ENCODE measurements at regions of chr9 and their contacts with region 1.

Region 1: GRCh38 chr9:114738581-114739316 is 56.8 kb upstream of the TEX48 start:
- DNase-seq: peak in 4 of 5 donors; percentile 67 to 83 (median 70)
- H3K4me3 ChIP-seq: no peak overlapping the region
- H3K27ac ChIP-seq: no peak overlapping the region
- H3K4me1 ChIP-seq: no peaks in the 10 kb centered on the region
- H3K27me3 ChIP-seq: no peaks in the 10 kb centered on the region
- CTCF ChIP-seq: peak; percentile 89

Region 2: GRCh38 chr9:114505187-114506081 is 233.3 kb before region 1 on chr9 and contains the start of gene WHRN:
- intact Hi-C with region 1: no loop called
- DNase-seq: peak; percentile 95 to 98 (median 97)
- H3K4me3 ChIP-seq: peak within 1 kb of the TSS; percentile 76 to 90 (median 83)
- H3K27ac ChIP-seq: peak within 1 kb of the TSS; percentile 41 to 72
- H3K4me1 ChIP-seq: peaks cover 0 to 12% (median 10%) of the 10 kb centered on the region in 3 donors
- H3K27me3 ChIP-seq: no peaks in the 10 kb centered on the region
- CTCF ChIP-seq: no peak
- total RNA-seq, gene WHRN: 14.8 TPM

Region 3: DNA sequence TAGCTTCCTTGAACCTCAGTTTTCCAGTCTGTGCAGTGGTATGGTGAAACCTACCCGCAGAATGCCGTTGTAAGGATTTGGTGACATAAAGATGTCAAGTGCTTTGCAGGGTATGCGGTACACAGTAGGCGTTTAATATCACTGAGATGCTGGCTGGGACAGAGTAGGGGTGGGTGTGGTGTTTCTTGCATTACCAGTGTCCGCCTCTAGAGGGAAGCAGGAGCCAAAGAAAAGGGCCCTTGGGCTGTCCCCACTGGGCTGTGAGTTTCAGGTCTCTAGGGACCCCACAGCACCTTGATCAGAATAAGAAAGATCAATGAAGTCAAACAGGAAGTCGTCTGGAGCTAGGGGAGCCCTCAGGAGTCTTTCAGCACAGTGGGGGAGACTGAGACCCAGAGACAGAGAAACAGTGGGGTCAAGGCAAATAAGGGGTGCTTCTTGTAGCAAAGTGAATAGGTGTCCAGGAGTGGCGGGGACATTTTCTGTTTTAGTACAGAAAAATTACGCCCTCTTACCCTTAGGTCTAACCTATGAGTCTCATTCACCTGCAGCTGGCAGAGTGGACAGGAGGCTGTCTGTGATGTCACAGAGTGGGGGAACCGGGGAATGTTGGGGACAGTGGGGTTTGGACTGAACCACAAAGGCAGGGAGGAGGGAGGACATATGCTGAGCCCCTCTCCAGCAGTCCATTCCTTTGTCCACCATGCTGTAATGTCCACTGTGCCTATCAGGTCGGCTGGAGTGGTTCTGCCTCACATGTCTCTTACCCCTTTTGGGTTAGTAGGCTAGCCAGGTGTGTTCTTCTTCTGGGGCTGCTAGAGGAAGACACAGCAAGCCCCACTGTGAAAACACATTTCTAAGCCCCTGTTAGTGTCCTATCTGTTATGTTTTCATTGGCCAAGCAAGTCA is 76.4 kb before region 1 on chr9:
- intact Hi-C with region 1: no loop called
- DNase-seq: peak in 4 of 5 donors; percentile 40 to 56 (median 50)
- H3K4me3 ChIP-seq: no peak overlapping the region
- H3K27ac ChIP-seq: no peak overlapping the region
- H3K4me1 ChIP-seq: no peaks in the 10 kb centered on the region
- H3K27me3 ChIP-seq: no peaks in the 10 kb centered on the region
- CTCF ChIP-seq: peak; percentile 73

Region 4: DNA sequence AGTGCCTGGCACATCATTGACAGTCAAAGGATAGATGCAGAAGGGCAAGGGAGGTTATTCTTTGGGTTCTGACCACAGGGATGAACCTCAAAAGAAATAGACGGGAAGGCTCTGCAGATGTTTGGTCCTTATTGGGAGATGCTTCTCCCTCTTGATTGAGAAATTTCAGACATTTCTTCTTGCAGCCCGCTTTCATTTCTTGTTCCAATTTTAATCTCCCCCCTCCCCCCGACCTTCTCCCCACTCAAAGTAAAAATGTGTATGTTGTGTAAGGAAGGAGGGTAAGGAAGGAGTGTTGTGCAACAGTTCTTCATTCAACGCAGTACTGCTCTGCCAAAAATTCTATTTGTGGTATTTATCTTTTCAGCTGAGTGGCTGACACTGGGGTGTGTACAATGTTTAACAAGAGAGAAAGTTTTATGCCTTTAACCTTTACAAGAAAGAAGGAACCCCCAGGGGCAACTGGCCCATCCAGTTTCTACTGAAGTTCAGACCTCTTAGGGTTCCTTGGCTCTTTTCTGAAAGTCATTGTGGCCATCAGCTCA is 113.4 kb after region 1 on chr9:
- intact Hi-C with region 1: no loop called
- DNase-seq: no peak
- H3K4me3 ChIP-seq: no peak overlapping the region
- H3K27ac ChIP-seq: no peak overlapping the region
- H3K4me1 ChIP-seq: no peaks in the 10 kb centered on the region
- H3K27me3 ChIP-seq: no peaks in the 10 kb centered on the region
- CTCF ChIP-seq: no peak

Region 5: DNA sequence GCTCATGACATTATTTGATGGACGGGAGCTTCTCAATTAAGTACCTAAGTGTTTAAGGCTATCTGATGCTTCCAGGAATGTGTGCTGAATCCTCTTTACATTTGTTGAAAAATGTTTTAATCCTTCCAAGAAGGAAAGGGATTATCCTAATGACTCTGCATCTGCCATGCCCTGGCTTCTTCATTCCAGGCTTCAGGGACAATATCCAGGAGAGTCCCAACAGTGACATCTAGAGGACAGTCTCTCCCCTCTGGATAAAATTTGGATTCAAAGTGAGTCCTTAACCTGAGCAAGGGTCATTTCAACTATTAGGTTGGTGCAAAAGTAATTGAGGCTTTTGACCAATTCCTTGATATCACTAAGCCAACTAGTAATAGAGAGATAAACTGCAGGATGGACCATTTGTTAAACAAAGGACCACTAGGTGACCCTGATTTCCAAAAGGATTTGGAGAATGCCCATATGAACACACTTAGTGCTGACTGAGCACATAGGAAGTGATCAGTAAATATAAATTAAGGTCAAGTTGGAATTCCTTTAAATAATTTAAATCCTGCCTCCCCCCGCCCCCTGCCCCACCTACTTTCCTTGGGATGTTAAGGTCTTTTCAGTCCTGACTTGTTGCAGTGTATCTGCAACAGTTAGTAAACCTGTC is 172.5 kb after region 1 on chr9:
- intact Hi-C with region 1: loop called (anchors 10 kb)
- DNase-seq: peak in 2 of 5 donors; percentile 58 to 72
- H3K4me3 ChIP-seq: no peak overlapping the region
- H3K27ac ChIP-seq: no peak overlapping the region
- H3K4me1 ChIP-seq: peaks cover 0 to 3% (median 0%) of the 10 kb centered on the region in 3 donors
- H3K27me3 ChIP-seq: no peaks in the 10 kb centered on the region
- CTCF ChIP-seq: peak; percentile 76

Region 6: GRCh38 chr9:115013998-115014397 is 275.2 kb after region 1 on chr9:
- intact Hi-C with region 1: loop called (anchors 10 kb)
- DNase-seq: peak; percentile 68 to 87 (median 70)
- H3K4me3 ChIP-seq: no peak overlapping the region
- H3K27ac ChIP-seq: no peak overlapping the region
- H3K4me1 ChIP-seq: no peaks in the 10 kb centered on the region
- H3K27me3 ChIP-seq: no peaks in the 10 kb centered on the region
- CTCF ChIP-seq: peak; percentile 82

Measured in kidney (tissue), 22 donors.